ENCODE measurements at regions of chr12 and their contacts with region 1.

Region 1: DNA sequence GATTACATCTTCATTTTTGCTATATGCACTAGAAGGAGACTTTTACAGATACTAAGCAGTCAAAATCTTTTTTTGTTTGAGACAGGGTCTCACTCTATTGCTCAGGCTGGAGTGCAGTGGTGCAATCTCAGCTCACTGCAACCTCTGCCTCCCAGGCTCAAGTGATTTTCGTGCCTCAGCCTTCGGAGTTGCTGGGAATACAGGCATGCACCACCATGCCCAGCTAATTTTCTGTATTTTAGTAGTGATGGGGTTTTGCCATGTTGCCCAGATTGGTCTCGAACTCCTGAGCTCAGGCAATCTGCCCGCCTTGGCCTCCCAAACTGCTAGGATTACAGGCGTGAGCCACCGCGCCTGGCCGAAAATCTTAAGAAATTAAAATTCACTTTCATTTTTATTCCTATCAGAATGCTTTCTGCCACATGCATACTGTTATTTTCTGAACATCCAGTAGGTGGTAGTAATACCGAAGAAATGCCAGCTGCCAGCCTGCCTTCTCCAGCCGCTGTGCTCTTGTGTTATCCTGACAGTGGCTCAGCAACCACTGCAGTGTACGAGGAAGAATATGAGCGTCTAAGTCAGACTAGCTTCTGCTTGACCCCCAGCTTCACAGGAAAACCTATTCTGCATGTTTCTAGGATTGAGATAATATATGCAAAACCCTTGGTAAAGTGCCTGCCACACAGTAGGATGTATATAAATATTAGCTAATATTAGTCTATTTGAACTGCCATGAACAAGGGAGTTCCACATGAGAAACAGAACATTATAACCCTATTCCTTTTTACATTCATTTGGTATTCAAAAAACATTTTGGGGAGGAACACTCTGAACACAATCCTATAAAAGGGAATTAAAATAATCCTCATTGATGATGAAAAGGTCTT is 54.2 kb downstream of the RPAP3 start:
- DNase-seq: peak; percentile 59
- H3K4me3 Mint-ChIP-seq: no peak overlapping the region
- H3K27ac Mint-ChIP-seq: no peak overlapping the region
- H3K4me1 Mint-ChIP-seq: peaks cover 12% of the 10 kb centered on the region
- H3K27me3 Mint-ChIP-seq: no peaks in the 10 kb centered on the region

Region 2: GRCh38 chr12:47636908-47637780 is 14.5 kb before region 1 on chr12:
- CTCF ChIA-PET with region 1: interaction called, 10 read pairs
- DNase-seq: peak; percentile 54
- H3K4me3 Mint-ChIP-seq: no peak overlapping the region
- H3K27ac Mint-ChIP-seq: no peak overlapping the region
- H3K4me1 Mint-ChIP-seq: no peaks in the 10 kb centered on the region
- H3K27me3 Mint-ChIP-seq: no peaks in the 10 kb centered on the region

Region 3: GRCh38 chr12:47686645-47687240 is 35.1 kb after region 1 on chr12:
- CTCF ChIA-PET with region 1: interaction called, 12 read pairs
- DNase-seq: peak; percentile 38
- H3K4me3 Mint-ChIP-seq: no peak overlapping the region
- H3K27ac Mint-ChIP-seq: no peak overlapping the region
- H3K4me1 Mint-ChIP-seq: peaks cover 7% of the 10 kb centered on the region
- H3K27me3 Mint-ChIP-seq: no peaks in the 10 kb centered on the region

Region 4: DNA sequence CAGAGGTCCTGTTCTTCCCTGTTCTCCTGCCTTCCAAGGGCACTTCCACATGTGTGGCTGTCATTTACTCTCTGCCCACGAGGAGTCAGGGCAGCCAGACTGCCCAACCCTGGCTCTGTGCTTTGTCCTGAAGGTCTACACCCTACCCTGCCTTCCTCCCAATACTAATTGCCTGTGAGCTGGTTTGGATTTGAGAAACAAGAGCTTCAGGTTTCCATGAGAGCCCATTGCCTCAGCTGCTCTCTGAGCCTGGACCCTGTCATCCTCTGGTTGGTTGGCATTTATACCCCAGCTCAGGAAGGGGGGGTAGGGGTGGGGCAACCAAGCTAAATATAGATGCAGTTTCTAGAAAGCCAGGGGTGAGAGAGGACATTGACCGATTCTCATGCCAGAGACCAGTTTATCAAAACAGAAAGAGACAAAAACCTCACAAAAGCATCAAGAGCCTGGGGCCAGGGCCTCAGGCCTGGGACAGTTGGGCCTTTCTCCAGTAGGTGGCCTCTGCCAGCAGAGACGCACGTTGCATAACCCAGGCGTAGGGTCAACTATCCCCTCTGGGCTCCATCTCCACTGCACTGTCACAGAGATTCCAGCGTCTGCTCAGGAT is 218.7 kb after region 1 on chr12:
- CTCF ChIA-PET with region 1: no interaction called
- DNase-seq: no peak
- H3K4me3 Mint-ChIP-seq: no peak overlapping the region
- H3K27ac Mint-ChIP-seq: peak overlapping the region; percentile 14
- H3K4me1 Mint-ChIP-seq: peaks cover 42% of the 10 kb centered on the region
- H3K27me3 Mint-ChIP-seq: no peaks in the 10 kb centered on the region